ENCODE measurements at regions of chr1 and their contacts with region 1.

Region 1: DNA sequence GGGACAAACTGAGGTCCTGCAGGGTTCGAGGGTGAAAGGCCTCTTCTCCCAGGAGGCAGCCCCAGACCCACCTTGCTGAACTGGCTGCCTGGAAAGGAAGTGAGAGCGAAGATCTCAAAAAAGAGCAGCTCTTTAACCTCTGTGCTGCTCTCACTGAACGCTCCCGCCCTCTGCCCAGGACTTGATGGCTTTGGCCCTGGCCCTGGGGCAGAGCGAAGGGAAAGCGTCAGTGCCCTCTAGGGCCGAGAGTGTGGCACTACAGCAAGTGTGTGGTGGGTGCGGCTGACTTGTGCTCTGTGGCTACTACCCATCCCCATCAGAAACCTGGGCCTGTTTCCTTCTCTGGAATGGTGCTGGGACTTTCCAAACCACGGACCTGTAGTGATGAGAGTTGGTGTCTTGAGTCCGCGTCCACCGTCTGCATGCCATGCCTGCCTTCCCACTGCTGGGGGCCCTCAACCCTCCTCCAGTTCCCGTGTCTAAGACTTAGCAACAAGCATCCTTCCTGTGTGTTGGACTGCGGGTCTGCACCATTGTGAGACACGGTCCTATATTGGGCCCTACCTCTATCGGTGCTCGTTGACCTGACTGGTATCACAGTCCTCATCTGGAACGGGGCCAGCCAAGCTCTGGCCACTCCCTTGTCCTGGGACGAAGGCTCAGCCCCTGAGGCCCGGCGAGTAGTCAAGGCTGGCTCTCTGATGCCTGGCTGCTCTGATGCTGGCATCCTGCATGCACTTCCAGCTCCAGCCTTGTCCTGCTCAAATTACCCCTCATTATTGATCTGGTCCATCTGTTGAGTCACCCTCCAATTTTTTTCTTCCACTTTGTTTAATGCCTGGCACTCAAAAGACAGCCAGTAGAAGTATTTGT is 180.3 kb downstream of the DISC1 start:
- DNase-seq: peak; percentile 70
- ATAC-seq: peak; percentile 61

Region 2: DNA sequence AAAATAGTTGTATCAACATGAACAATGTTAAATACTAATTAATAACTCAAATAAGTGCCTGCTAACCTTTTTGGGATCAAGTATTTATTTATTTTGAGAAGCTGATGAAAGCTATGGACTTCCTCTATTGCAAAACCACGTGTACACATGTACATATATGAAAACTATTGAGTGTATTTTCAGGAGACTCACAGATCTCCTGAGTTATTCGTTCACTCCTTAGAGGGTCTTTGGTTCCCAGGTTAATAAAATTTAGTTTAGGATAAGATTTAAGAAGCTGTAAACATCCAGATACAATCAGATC is 49.8 kb before region 1 on chr1:
- intact Hi-C with region 1: loop called (anchors 5 kb)
- DNase-seq: no peak
- ATAC-seq: no peak

Measured in Right ventricle myocardium inferior (tissue), 1 donor.